ENCODE measurements at regions of chr21 and their contacts with region 1.

Region 1: DNA sequence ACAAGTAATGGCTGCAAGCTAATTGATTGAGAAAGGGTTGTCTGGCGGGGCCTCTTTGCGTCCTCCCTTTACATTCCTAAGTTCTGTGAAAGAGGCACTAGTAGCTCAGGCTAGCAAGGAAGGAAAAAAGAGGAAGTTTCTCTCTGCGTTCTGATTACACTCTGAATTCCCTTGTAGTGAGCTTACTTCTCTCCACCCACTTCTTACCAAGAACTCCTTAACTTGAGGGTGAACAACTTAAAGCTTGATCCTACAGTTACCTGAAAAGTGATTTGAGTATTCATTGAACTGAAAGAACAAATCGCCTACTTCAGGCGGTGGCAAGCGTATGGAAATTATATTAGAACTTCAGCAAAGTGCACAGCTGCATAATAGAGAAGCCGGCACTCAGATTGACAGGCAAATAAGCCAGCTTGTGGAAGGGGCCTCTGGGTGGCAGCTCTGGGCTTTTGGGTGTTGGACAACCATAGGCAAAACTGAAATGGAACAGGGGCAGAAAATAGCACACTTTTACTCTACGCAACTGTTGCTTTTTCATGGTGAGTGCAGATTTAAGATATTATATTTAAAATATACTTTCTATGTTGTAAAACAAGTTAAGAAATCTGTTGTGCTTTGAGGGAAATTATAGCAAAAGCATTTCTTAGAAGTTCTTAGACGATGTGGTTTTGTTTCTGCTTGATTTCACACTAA is 464.5 kb downstream of the USP25 start:
- DNase-seq: peak; percentile 91
- H3K4me3 ChIP-seq: peak overlapping the region; percentile 59 to 94 (median 63)
- H3K27ac ChIP-seq: peak overlapping the region; percentile 92
- H3K4me1 ChIP-seq: peaks cover 33% of the 10 kb centered on the region
- H3K27me3 ChIP-seq: no peaks in the 10 kb centered on the region
- CTCF ChIP-seq: peak; percentile 13 to 41
- POLR2A ChIP-seq: peak; percentile 54

Region 2: DNA sequence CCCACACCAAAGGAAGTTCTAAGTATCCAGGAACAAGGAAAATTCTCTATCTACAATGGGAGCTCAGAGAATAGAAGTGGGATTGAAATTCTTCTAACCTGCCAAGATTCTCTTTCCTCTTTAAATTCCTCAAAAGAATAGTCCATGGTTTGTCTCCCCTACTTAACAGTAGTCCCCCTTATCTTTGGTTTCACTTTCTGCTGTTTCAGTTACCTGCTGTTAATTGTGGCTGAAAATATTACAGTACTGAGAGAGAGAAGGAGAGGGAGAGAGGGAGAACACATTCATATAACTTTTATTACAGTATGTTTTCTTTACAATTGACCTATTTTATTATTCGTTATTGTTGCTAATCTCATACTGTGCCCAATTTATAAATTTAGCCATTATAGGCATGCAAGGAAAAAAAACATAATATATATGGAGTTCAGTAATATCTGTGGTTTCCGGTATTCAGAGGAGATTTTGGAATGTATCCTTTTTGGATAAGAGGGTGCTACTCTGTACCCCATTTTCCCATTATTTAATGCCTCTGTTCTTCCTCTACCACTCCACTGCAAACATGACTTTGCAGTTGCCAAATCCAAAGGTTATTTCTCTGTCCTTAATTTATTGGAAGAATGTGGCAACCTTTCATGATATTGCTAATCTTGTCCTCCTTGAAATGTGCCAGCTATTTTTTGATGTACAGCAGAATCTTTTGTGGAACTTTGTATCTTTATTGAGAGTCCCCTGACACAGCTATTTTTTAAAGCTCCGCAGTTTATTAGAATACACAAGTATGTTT is 396.5 kb before region 1 on chr21:
- CTCF ChIA-PET with region 1: no interaction called
- POLR2A ChIA-PET with region 1: no interaction called
- dilution Hi-C with region 1: no loop called
- intact Hi-C with region 1: no loop called
- DNase-seq: no peak
- H3K4me3 ChIP-seq: no peak overlapping the region
- H3K27ac ChIP-seq: no peak overlapping the region
- H3K4me1 ChIP-seq: peaks cover 4% of the 10 kb centered on the region
- H3K27me3 ChIP-seq: no peaks in the 10 kb centered on the region
- CTCF ChIP-seq: no peak
- POLR2A ChIP-seq: no peak

Region 3: DNA sequence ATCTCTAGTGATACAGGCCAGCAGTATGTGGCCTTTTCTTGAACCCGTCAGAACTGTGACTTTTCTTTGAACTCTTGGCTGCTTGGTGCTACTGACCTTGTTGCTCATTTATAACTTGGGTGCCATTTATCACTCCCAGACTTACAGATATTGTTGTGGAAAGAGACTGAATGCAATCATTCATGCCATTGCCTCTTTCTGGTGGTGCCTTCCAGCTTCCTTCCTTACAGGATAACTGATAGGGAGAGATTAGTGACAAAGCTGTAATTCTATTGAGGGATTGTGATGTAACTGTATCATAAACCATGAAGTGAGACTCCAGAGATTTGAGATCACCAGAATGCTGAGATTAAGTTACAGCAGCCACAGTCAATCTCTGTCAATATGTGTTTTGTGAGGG is 208.0 kb before region 1 on chr21:
- CTCF ChIA-PET with region 1: no interaction called
- POLR2A ChIA-PET with region 1: no interaction called
- dilution Hi-C with region 1: no loop called
- intact Hi-C with region 1: loop called (anchors 5 kb)
- DNase-seq: peak; percentile 98
- H3K4me3 ChIP-seq: no peak overlapping the region
- H3K27ac ChIP-seq: peak overlapping the region; percentile 86
- H3K4me1 ChIP-seq: peaks cover 29% of the 10 kb centered on the region
- H3K27me3 ChIP-seq: no peaks in the 10 kb centered on the region
- CTCF ChIP-seq: no peak
- POLR2A ChIP-seq: peak; percentile 55

Region 4: DNA sequence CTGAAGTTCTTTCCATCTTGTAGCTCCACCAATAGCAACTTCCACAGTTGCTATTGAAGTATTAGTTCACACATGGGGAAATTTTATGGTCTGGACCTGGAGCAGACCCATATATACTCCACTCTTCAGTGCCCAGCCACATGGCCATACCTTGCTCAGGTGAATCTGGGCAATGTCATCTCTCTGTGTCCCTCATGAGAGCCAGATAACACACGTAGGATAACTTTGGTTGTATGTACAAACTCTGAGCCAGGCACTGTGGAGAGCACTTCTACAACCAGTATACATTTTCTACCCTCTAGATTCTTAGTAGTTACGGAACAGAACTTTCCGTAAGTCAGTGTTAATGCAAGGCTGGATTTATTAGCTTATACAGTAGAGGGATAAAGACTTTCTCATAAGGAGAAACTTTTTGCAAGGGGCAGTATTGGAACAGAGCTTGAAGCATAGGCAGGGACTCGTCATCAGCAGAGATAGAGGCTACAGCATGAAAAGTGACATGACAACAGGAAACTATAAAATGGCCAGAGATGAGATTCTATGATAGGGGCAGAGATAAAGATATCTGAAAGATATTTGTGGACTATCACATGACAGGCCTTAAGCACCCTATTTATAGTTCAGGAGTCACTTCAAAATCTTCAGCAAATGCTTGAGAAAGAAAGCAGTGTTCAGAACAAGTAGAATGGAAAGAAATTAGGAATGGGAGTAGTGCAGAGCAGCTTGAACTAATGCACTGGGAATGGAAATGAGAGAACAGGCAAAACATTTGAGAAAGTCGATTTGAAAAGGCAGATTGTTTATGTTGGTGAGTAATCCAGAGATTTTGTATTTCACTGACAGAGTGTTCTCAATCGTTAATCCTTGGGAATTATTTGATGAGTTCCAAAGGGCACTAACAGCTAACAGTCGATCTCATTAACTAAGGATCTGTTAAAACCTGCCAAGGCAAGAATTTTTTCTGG is 17.4 kb after region 1 on chr21:
- CTCF ChIA-PET with region 1: interaction called, 15 read pairs
- POLR2A ChIA-PET with region 1: no interaction called
- dilution Hi-C with region 1: no loop called
- intact Hi-C with region 1: loop called (anchors 1 kb)
- DNase-seq: peak; percentile 37
- H3K4me3 ChIP-seq: no peak overlapping the region
- H3K27ac ChIP-seq: no peak overlapping the region
- H3K4me1 ChIP-seq: peaks cover 26% of the 10 kb centered on the region
- H3K27me3 ChIP-seq: no peaks in the 10 kb centered on the region
- CTCF ChIP-seq: no peak
- POLR2A ChIP-seq: no peak

Region 5: GRCh38 chr21:16308269-16308668 is 114.0 kb after region 1 on chr21:
- CTCF ChIA-PET with region 1: interaction called, 4 read pairs
- POLR2A ChIA-PET with region 1: interaction called, 3 read pairs
- dilution Hi-C with region 1: no loop called
- intact Hi-C with region 1: loop called (anchors 5 kb)
- DNase-seq: peak; percentile 56
- H3K4me3 ChIP-seq: peak overlapping the region; percentile 13 to 54 (median 41)
- H3K27ac ChIP-seq: peak overlapping the region; percentile 35
- H3K4me1 ChIP-seq: peaks cover 40% of the 10 kb centered on the region
- H3K27me3 ChIP-seq: no peaks in the 10 kb centered on the region
- CTCF ChIP-seq: no peak
- POLR2A ChIP-seq: no peak

Region 6: GRCh38 chr21:16426936-16427335 is 232.7 kb after region 1 on chr21:
- CTCF ChIA-PET with region 1: no interaction called
- POLR2A ChIA-PET with region 1: no interaction called
- dilution Hi-C with region 1: no loop called
- intact Hi-C with region 1: loop called (anchors 1 kb)
- DNase-seq: peak; percentile 65
- H3K4me3 ChIP-seq: peak overlapping the region in 1 of 3 experiments; percentile 21
- H3K27ac ChIP-seq: peak overlapping the region; percentile 85
- H3K4me1 ChIP-seq: peaks cover 52% of the 10 kb centered on the region
- H3K27me3 ChIP-seq: no peaks in the 10 kb centered on the region
- CTCF ChIP-seq: no peak
- POLR2A ChIP-seq: no peak

Measured in endothelial cell of umbilical vein (primary cell).